PC-9 (cell line): ENCODE measurements at regions of chr2 and their contacts with region 1.

Region 1: DNA sequence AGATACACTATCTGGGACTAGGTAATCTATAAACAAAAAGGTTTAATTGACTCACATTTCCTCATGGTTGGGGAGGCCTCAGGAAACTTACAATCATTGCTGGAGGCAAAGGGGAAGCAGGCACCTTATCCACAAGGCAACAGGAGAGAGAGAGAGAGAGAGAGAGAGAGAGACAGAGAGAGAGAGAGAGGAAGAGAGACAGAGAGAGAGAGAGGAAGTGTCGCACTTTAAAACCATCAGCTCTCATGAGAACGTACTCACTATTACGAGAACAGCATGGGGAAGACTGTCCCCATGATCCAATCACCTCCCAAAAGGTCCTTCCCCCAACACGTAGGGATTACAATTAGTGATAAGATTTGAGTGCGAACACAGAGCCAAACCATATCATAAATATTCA is 253.5 kb upstream of the TRIB2 start:
- DNase-seq: no peak
- H3K4me3 ChIP-seq: no peak overlapping the region
- H3K27ac ChIP-seq: no peak overlapping the region
- H3K4me1 ChIP-seq: peaks cover under 1% of the 10 kb centered on the region; the same call in 1 of the 2 replicates
- H3K27me3 ChIP-seq: no peaks in the 10 kb centered on the region
- CTCF ChIP-seq: no peak

Region 2: DNA sequence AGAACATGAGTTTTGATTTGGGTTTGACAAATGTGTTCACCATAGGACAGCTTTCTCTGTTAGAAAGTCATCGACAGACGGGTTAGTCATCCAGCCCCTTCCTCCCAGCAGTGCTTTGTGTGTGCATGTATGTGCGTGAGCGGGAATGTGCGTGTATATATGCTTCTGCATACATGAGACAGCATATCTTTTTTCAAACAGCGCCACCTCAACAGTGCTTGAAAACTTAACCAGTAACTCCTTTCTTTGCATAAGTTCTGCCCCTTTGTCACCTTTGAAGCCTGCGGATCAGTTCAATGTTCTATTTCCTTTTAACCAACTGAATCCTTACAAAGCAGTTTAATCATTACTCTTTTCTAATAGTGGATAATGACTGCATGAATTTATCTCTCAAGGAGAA is 365.3 kb before region 1 on chr2:
- CTCF ChIA-PET with region 1: no interaction called
- POLR2A ChIA-PET with region 1: no interaction called
- intact Hi-C with region 1: loop called (anchors 5 kb)
- DNase-seq: no peak
- H3K4me3 ChIP-seq: no peak overlapping the region
- H3K27ac ChIP-seq: no peak overlapping the region
- H3K4me1 ChIP-seq: peaks cover 15% of the 10 kb centered on the region
- H3K27me3 ChIP-seq: no peaks in the 10 kb centered on the region
- CTCF ChIP-seq: no peak